ENCODE measurements at regions of chr10 and their contacts with region 1.

Region 1: GRCh38 chr10:122342293-122343134 is 32.0 kb upstream of the PLEKHA1 start:
- DNase-seq: no peak
- H3K4me3 ChIP-seq: no peak overlapping the region
- H3K27ac ChIP-seq: peak overlapping the region; percentile 84
- H3K4me1 ChIP-seq: peaks cover 64% of the 10 kb centered on the region
- H3K27me3 ChIP-seq: no peaks in the 10 kb centered on the region
- CTCF ChIP-seq: peak; percentile 89

Region 2: GRCh38 chr10:122298598-122299301 is 43.8 kb before region 1 on chr10:
- intact Hi-C with region 1: loop called (anchors 2 kb)
- DNase-seq: peak; percentile 63
- H3K4me3 ChIP-seq: peak overlapping the region; percentile 41
- H3K27ac ChIP-seq: no peak overlapping the region
- H3K4me1 ChIP-seq: peaks cover 8% of the 10 kb centered on the region
- H3K27me3 ChIP-seq: no peaks in the 10 kb centered on the region
- CTCF ChIP-seq: peak; percentile 93

Region 3: DNA sequence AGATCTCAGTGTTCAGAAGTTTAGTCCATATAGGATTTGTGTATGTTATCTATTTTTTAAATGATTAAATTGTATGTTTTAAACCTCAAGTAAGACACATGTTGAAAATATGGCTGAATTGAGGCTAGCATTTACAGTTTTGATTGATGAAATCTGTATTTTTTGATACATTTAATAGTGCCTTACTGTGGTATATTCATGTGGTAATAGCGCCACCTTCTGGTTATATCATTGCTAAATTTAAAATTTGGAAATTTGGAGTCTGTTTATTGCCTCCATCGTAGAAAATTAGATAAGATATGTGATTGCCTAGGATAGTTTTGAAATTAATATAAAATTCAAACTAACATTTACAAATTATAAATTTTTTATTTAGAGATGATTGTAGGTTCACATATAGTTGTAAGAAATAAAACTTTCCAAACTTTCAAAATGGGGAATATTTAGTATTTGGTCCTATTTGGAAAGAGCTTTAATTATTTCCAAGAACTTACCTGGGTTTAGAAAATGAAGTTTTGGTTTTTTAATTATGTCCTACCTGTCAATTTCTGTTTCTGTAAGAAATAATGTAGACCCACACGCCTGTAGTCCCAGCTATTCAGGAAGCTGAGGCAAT is 92.8 kb after region 1 on chr10:
- intact Hi-C with region 1: loop called (anchors 5 kb)
- DNase-seq: no peak
- H3K4me3 ChIP-seq: no peak overlapping the region
- H3K27ac ChIP-seq: no peak overlapping the region
- H3K4me1 ChIP-seq: no peaks in the 10 kb centered on the region
- H3K27me3 ChIP-seq: no peaks in the 10 kb centered on the region
- CTCF ChIP-seq: peak; percentile 74

Region 4: GRCh38 chr10:122565728-122566206 is 223.3 kb after region 1 on chr10:
- intact Hi-C with region 1: loop called (anchors 5 kb)
- DNase-seq: peak; percentile 77
- H3K4me3 ChIP-seq: peak overlapping the region; percentile 38
- H3K27ac ChIP-seq: no peak overlapping the region
- H3K4me1 ChIP-seq: peaks cover 7% of the 10 kb centered on the region
- H3K27me3 ChIP-seq: peaks cover 23% of the 10 kb centered on the region
- CTCF ChIP-seq: peak; percentile 90

Measured in left ventricle myocardium inferior (tissue), 1 donor.